Ascending aorta (tissue), 2 donors: ENCODE measurements at regions of chr5 and their contacts with region 1.

Region 1: DNA sequence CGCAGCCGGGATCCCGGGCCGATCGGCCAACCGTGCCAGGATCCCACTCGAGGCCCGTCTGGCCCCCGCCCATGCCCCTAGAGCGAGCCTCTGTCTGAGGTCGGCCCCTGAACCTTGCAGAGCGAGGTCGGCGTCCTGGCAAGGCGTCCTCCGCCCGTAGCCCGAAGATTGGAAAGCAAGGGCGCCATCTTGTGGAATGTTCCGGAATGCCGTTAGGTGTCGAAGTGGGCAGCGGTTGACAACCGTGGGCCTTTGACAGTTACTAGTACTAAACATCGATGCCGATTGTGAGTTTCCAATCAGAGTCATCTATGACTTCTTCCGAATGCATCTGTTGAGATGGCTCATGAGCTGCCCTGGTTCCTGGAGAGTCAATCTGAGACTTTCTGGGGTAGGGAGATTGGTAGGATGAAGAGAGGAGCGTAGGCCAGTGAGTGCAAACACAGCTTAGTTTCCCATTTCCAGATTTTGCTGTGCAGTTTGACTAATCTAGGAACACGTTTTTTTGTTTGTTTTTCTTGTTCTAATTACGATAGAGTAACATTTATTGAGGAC is 923 bp upstream of the PLK2 start:
- DNase-seq: peak in 1 of 2 donors; percentile 95
- H3K4me3 ChIP-seq: peak overlapping the region; percentile 83 to 92
- H3K27ac ChIP-seq: peak overlapping the region; percentile 98 to 99
- H3K4me1 ChIP-seq: peaks cover 0 to 6% of the 10 kb centered on the region in 2 donors
- H3K27me3 ChIP-seq: no peaks in the 10 kb centered on the region
- CTCF ChIP-seq: peak; percentile 66 to 78 (median 72)

Region 2: GRCh38 chr5:56951946-56952691 is 1508.7 kb before region 1 on chr5 and contains the start of gene MIER3:
- intact Hi-C with region 1: loop called (anchors 10 kb)
- DNase-seq: peak; percentile 12 to 87
- H3K4me3 ChIP-seq: peak within 1 kb of the TSS; percentile 82 to 98
- H3K27ac ChIP-seq: peak within 1 kb of the TSS; percentile 87 to 92
- H3K4me1 ChIP-seq: peaks cover 0 to 2% of the 10 kb centered on the region in 2 donors
- H3K27me3 ChIP-seq: no peaks in the 10 kb centered on the region
- CTCF ChIP-seq: no peak
- total RNA-seq, gene MIER3: 5.5 TPM

Region 3: GRCh38 chr5:57408714-57409113 is 1052.1 kb before region 1 on chr5:
- intact Hi-C with region 1: loop called (anchors 10 kb)
- DNase-seq: no peak
- H3K4me3 ChIP-seq: no peak overlapping the region
- H3K27ac ChIP-seq: peak overlapping the region in 1 of 2 donors; percentile 79
- H3K4me1 ChIP-seq: peaks cover 17 to 73% of the 10 kb centered on the region in 2 donors
- H3K27me3 ChIP-seq: no peaks in the 10 kb centered on the region
- CTCF ChIP-seq: no peak

Region 4: GRCh38 chr5:57779383-57780223 is 681.2 kb before region 1 on chr5:
- intact Hi-C with region 1: loop called (anchors 1 kb)
- DNase-seq: no peak
- H3K4me3 ChIP-seq: peak overlapping the region in 1 of 2 donors; percentile 35
- H3K27ac ChIP-seq: peak overlapping the region in 1 of 2 donors; percentile 11
- H3K4me1 ChIP-seq: peaks cover 6% of the 10 kb centered on the region in 2 donors
- H3K27me3 ChIP-seq: no peaks in the 10 kb centered on the region
- CTCF ChIP-seq: peak; percentile 35 to 62 (median 50)

Region 5: DNA sequence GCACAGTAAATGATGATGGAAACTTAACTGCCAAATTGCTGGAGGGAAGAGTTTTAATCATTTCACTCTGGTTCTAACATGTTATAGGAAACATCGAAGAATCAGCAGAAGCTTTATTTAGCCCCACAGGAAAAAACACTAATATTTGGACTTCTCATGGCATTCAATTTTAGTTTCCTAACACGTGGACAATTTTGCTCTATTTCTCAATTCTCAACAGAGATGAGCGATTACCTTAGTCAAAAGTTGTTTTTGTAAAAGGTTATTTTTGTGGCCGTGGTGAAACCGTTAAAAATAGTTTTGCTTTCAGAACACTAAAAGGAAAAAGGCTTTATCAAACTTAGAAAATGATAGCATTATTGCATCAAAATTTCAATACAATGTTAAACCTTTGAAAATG is 236.1 kb before region 1 on chr5:
- intact Hi-C with region 1: loop called (anchors 2 kb)
- DNase-seq: no peak
- H3K4me3 ChIP-seq: peak overlapping the region in 1 of 2 donors; percentile 41
- H3K27ac ChIP-seq: peak overlapping the region; percentile 88
- H3K4me1 ChIP-seq: peaks cover 0 to 26% of the 10 kb centered on the region in 2 donors
- H3K27me3 ChIP-seq: no peaks in the 10 kb centered on the region
- CTCF ChIP-seq: no peak

Region 6: DNA sequence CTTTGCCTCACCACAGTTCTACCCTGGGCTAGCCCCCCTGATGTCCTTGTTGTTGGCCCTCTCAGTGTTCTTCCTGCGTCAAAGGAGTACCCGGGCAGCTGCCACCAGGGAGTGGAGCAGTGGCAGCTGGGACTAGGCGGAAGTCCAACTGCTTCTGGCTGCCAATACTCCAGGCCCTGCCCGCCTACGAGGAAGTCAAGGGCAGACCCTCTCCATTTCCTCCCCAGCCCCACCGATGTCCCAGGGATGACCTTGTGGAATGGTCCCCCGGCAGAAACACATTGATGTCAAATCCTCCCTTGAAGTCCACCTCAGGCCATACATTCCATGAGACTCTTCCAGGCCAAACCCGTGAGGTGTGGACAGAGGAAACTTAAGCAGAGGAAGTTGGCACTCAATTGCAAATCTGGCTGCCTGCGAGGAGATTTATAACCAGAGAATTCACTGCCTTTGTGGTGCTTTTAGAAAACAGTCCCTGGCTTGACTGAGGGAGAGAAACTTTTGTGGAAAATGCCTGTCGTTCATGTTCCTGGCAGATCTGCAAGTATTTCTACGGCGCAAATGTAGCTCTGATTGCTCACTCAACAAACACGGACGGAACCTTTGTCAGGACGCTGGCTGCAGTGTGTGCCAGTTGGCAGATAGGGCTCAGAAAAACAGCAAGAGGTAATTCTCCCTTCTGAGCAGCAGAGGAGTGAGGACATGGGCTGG is 461.8 kb after region 1 on chr5:
- intact Hi-C with region 1: loop called (anchors 5 kb)
- DNase-seq: peak; percentile 41 to 95
- H3K4me3 ChIP-seq: peak overlapping the region in 1 of 2 donors; percentile 47
- H3K27ac ChIP-seq: peak overlapping the region; percentile 94 to 97
- H3K4me1 ChIP-seq: peaks cover 15 to 59% of the 10 kb centered on the region in 2 donors
- H3K27me3 ChIP-seq: no peaks in the 10 kb centered on the region
- CTCF ChIP-seq: peak in 2 of 3 experiments; percentile 10 to 20